PC-3 (cell line): ENCODE measurements at regions of chr9 and their contacts with region 1.

Region 1: DNA sequence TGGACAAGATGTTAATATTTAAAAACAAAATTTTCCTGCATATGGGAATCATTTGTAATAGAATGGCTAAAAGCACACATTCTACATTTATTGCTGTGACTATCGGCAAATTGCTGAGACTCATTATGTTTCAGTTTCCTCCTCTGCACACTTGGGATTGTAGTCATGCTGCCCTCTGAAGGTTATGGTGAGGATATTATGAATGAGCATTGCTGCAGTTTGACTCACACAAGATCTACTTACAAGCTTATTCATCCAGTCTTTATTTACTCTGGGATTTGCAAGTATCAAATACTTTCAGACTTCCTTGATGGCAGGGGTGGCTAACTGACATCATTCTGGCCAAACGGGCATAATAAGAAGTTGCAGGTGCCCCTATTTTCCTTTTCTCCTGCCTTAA is 9.5 kb upstream of the NFIL3 start:
- DNase-seq: peak; percentile 88
- ATAC-seq: peak; percentile 99
- H3K4me3 ChIP-seq: peak overlapping the region; percentile 31; the same call in 1 of the 2 replicates
- H3K27ac ChIP-seq: peak overlapping the region; percentile 44
- H3K4me1 ChIP-seq: peaks cover 23% of the 10 kb centered on the region
- H3K27me3 ChIP-seq: no peaks in the 10 kb centered on the region
- CTCF ChIP-seq: peak; percentile 58

Region 2: GRCh38 chr9:91536211-91536691 is 103.1 kb after region 1 on chr9:
- CTCF ChIA-PET with region 1: no interaction called
- POLR2A ChIA-PET with region 1: interaction called, 4 read pairs
- intact Hi-C with region 1: loop called (anchors 5 kb)
- DNase-seq: peak; percentile 90
- ATAC-seq: peak; percentile 95
- H3K4me3 ChIP-seq: peak overlapping the region; percentile 44; the same call in 1 of the 2 replicates
- H3K27ac ChIP-seq: peak overlapping the region; percentile 98
- H3K4me1 ChIP-seq: peaks cover 62% of the 10 kb centered on the region
- H3K27me3 ChIP-seq: no peaks in the 10 kb centered on the region
- CTCF ChIP-seq: no peak

Region 3: GRCh38 chr9:91558879-91559278 is 125.7 kb after region 1 on chr9:
- CTCF ChIA-PET with region 1: no interaction called
- POLR2A ChIA-PET with region 1: no interaction called
- intact Hi-C with region 1: loop called (anchors 5 kb)
- DNase-seq: no peak
- ATAC-seq: no peak
- H3K4me3 ChIP-seq: no peak overlapping the region
- H3K27ac ChIP-seq: no peak overlapping the region
- H3K4me1 ChIP-seq: no peaks in the 10 kb centered on the region
- H3K27me3 ChIP-seq: no peaks in the 10 kb centered on the region
- CTCF ChIP-seq: peak; percentile 21; the same call in 1 of the 2 replicates

Region 4: GRCh38 chr9:91676046-91676445 is 242.9 kb after region 1 on chr9:
- CTCF ChIA-PET with region 1: interaction called, 4 read pairs
- POLR2A ChIA-PET with region 1: interaction called, 7 read pairs
- intact Hi-C with region 1: loop called (anchors 2 kb)
- DNase-seq: peak; percentile 64
- ATAC-seq: peak; percentile 80
- H3K4me3 ChIP-seq: no peak overlapping the region
- H3K27ac ChIP-seq: no peak overlapping the region
- H3K4me1 ChIP-seq: peaks cover 16% of the 10 kb centered on the region
- H3K27me3 ChIP-seq: no peaks in the 10 kb centered on the region
- CTCF ChIP-seq: peak; percentile 74